A549 (cell line): ENCODE measurements at regions of chr9 and their contacts with region 1.

Region 1: DNA sequence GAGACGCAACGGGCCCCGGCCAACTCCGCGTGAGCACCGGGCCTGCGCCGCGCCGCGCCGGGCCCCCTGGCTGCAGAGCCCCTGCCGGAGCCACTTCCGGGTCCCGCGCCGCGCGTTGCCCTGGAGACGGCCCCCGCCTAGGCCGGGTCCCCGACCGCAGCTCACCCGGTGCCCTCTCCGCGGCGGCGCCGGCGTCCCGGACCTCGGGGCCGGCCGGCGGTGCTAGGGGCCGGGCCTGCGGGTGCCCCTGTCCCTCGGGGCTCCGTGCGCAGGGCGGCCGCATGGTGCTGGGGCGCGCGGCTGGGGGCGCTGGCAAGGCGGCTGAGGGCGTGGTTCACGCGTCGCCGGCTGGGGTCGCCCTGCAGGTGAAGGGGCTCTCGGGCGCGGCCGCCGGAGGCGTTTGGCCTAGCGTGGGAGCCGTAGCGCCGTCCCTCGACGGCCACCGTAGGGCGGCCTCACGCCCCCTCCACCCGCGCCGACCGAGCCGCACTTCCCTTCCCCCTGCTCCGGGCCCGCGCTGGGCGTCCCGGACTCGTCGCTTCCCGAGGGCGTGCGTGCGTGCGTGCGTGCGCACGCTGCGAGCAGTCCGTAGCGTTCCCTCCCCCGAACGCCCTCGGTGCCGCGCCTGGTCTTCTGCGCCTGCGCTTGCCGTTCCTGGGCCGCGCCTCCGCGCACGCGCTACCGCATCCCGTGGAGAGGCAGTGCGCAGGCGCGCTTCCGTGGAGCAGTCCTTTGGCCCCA is at the start of gene TMEM250:
- DNase-seq: peak; percentile 87 to 98
- ATAC-seq: peak; percentile 76 to 87
- H3K4me3 ChIP-seq: peak within 1 kb of the TSS; percentile 93
- H3K27ac ChIP-seq: peak within 1 kb of the TSS; percentile 96 to 100
- H3K4me1 ChIP-seq: peaks cover 18% of the 10 kb centered on the region
- CTCF ChIP-seq: no peak
- EP300 ChIP-seq: no peak; a peak in 1 of 5 replicates
- POLR2A ChIP-seq: peak; percentile 84
- RAD21 ChIP-seq: no peak
- polyA plus RNA-seq, gene TMEM250: 13.0 and 15.3 TPM in 2 replicates

Region 2: GRCh38 chr9:135864447-135865049 is 253.9 kb before region 1 on chr9:
- CTCF ChIA-PET with region 1: interaction called, 21 read pairs
- POLR2A ChIA-PET with region 1: no interaction called
- DNase-seq: peak; percentile 44 to 66
- ATAC-seq: peak; percentile 71 to 87; a peak in 5 of 6 replicates
- H3K4me3 ChIP-seq: no peak overlapping the region
- H3K27ac ChIP-seq: no peak overlapping the region
- H3K4me1 ChIP-seq: no peaks in the 10 kb centered on the region
- CTCF ChIP-seq: peak; percentile 78
- EP300 ChIP-seq: no peak
- POLR2A ChIP-seq: no peak
- RAD21 ChIP-seq: peak; percentile 48 to 63; a peak in 4 of 5 replicates

Region 3: GRCh38 chr9:135992486-135993408 is 125.7 kb before region 1 on chr9:
- CTCF ChIA-PET with region 1: interaction called, 10 read pairs
- POLR2A ChIA-PET with region 1: no interaction called
- DNase-seq: peak; percentile 36 to 70
- ATAC-seq: peak; percentile 37 to 72; a peak in 5 of 6 replicates
- H3K4me3 ChIP-seq: peak overlapping the region; percentile 7; the same call in 2 of the 3 replicates
- H3K27ac ChIP-seq: peak overlapping the region; percentile 72 to 92
- H3K4me1 ChIP-seq: peaks cover 25% of the 10 kb centered on the region
- CTCF ChIP-seq: no peak
- EP300 ChIP-seq: no peak
- POLR2A ChIP-seq: peak; percentile 5; the same call in 1 of the 2 replicates
- RAD21 ChIP-seq: no peak

Region 4: GRCh38 chr9:136023410-136024225 is 94.9 kb before region 1 on chr9:
- CTCF ChIA-PET with region 1: interaction called, 13 read pairs
- POLR2A ChIA-PET with region 1: interaction called, 4 read pairs
- DNase-seq: no peak
- ATAC-seq: peak; percentile 36 to 37; a peak in 3 of 6 replicates
- H3K4me3 ChIP-seq: no peak overlapping the region
- H3K27ac ChIP-seq: no peak overlapping the region
- H3K4me1 ChIP-seq: no peaks in the 10 kb centered on the region
- CTCF ChIP-seq: no peak
- EP300 ChIP-seq: no peak
- POLR2A ChIP-seq: no peak
- RAD21 ChIP-seq: no peak

Region 5: GRCh38 chr9:136059321-136060233 is 58.9 kb before region 1 on chr9:
- CTCF ChIA-PET with region 1: interaction called, 24 read pairs
- POLR2A ChIA-PET with region 1: no interaction called
- DNase-seq: no peak
- ATAC-seq: peak in 1 of 2 experiments; percentile 8; a peak in 2 of 6 replicates
- H3K4me3 ChIP-seq: no peak overlapping the region
- H3K27ac ChIP-seq: no peak overlapping the region
- H3K4me1 ChIP-seq: peaks cover 39% of the 10 kb centered on the region
- CTCF ChIP-seq: no peak
- EP300 ChIP-seq: no peak
- POLR2A ChIP-seq: no peak
- RAD21 ChIP-seq: no peak

Region 6: GRCh38 chr9:136100700-136101614 is 17.5 kb before region 1 on chr9:
- CTCF ChIA-PET with region 1: interaction called, 27 read pairs
- POLR2A ChIA-PET with region 1: interaction called, 8 read pairs
- DNase-seq: peak in 1 of 2 experiments; percentile 56
- ATAC-seq: peak; percentile 16 to 53; a peak in 4 of 6 replicates
- H3K4me3 ChIP-seq: no peak overlapping the region
- H3K27ac ChIP-seq: 0 out of 6 replicates have a peak overlapping the region, but pooled peaks of 1 of the 2 experiments have one; percentile 25
- H3K4me1 ChIP-seq: peaks cover 19% of the 10 kb centered on the region
- CTCF ChIP-seq: no peak
- EP300 ChIP-seq: no peak
- POLR2A ChIP-seq: no peak
- RAD21 ChIP-seq: no peak

Region 7: DNA sequence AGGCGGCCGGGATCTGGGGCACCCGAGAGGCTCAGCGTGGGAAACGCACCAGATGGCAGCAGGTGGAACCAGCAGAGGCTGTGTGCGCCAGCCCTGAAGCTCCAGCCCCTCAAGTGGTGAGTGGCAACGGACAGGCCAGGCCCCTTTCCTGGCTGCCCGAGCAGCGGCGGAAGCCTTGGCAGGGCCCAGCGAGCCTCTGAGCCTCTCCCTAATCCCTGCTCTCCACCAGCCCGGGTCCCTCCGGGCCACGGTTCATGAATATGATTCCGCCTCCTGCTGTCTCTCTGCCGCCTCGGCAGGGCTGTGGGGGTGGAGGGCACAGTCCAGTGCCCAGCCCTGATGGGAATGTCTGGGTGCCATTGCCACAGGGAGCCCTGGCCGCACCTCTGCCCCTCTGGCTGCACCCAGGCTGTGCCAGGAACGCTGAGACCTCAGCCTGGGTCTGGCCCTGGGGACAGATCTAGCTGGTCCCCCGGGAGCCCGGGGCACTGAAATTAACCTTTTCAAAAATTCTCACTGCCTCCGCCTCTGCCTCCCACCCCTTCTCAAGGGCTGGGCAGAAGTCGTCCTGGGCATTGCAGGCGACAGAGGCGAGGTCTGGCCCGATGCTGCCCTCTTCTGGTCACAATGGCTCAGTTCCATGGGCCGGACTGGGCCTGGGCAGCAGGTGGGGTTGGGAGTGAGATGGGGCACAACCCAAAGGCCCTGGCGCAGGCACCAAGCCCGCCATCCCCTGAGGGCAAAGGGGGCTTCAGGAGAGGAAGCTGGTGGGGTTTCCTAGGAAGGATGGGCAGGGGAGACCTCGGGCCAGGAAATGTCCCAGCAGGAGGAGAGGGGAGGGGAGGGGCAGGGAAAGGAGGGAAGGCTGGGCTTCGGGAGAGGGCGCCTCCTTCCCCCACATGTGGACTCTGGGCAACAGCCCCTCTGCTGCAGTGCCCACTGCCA is 165.1 kb after region 1 on chr9:
- CTCF ChIA-PET with region 1: interaction called, 12 read pairs
- POLR2A ChIA-PET with region 1: no interaction called
- DNase-seq: peak; percentile 78 to 88
- ATAC-seq: peak; percentile 89 to 98
- H3K4me3 ChIP-seq: no peak overlapping the region
- H3K27ac ChIP-seq: no peak overlapping the region
- H3K4me1 ChIP-seq: 0 out of 3 replicates have a peak, but pooled peaks cover 2% of the 10 kb centered on the region
- CTCF ChIP-seq: peak; percentile 80
- EP300 ChIP-seq: no peak
- POLR2A ChIP-seq: no peak
- RAD21 ChIP-seq: peak; percentile 85 to 90